MCF 10A (cell line): ENCODE measurements at regions of chr19 and their contacts with region 1.

Region 1: DNA sequence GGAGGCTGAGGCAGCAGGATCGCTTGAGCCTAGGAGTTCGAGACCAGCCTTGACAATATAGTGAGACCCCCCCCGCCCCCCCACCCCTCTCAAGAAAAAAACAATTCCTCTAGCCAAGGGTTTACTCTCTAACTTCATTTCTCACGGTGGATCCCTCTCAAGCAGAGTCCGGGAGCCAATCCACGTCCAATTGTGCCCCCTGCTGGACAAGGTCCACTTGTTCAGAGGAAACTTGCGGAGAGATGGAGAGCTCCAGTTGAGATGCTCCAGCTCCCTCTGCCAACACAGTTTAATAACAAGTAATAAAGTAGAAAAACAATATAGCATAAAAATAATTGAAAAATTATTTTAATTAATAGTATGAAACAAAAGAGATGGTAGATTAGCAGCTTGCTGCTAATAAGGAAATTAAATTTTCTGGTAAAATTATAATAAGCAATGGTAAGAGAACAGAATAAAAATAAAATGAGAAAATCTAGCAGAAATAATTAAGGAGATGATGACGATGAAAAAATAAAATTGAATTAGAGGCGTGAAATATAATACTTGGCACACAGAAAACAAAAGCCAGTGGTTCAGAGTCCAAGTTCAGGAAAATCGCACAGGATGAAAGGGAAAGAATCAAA is 14.5 kb upstream of the SIGLEC14 start:
- DNase-seq: peak; percentile 90
- H3K4me3 Mint-ChIP-seq: no peak overlapping the region
- H3K27ac Mint-ChIP-seq: no peak overlapping the region
- H3K4me1 Mint-ChIP-seq: peaks cover 7% of the 10 kb centered on the region
- H3K27me3 Mint-ChIP-seq: peaks cover 30% of the 10 kb centered on the region
- CTCF ChIP-seq: peak; percentile 66

Region 2: GRCh38 chr19:51012661-51013190 is 648.4 kb before region 1 on chr19:
- CTCF ChIA-PET with region 1: no interaction called
- POLR2A ChIA-PET with region 1: no interaction called
- intact Hi-C with region 1: no loop called
- DNase-seq: no peak
- H3K4me3 Mint-ChIP-seq: no peak overlapping the region
- H3K27ac Mint-ChIP-seq: no peak overlapping the region
- H3K4me1 Mint-ChIP-seq: peaks cover 7% of the 10 kb centered on the region
- H3K27me3 Mint-ChIP-seq: peaks cover 15% of the 10 kb centered on the region
- CTCF ChIP-seq: no peak

Region 3: DNA sequence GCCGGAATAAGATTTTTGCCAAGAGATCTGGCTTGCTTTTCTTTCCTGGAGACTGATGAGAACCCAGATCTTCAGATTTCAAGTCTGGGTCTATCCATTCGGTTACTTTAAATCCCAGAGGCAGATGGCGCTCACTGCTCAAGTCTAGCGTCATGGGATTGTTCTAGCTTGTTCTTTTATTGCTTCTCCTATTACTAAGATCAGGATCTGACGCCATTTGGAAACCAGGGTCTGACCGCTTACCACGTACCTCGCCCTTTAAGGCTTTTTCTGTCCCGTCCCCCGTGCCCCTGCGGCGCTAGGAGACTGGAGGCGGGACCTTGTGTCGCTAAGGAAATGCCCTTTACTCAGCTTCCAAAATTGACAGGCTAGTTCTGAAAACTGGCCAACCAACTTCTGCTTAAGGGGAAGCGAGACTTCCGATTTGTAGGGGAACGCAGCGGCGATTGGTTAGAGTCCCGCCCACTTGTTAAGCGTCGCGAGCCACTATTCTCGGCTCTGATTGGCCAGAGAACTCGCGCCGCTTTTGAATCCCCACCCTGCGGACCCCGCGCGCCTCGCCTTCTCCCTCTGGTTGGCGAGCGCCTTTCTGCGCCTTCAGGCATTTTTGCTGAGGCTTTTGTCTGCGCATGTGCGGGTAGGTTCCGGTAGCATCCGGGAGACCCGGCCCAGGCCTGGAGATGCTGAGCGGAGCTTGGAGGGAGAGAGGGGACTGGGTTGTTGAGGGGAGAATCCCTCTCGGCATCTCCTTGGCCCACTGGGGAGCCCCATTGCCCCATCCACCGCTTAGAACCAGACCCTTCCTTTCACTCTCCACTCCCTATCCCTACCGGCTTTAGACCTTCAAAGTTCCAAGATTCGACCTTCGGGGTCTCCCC is 266.9 kb before region 1 on chr19:
- CTCF ChIA-PET with region 1: interaction called, 28 read pairs
- POLR2A ChIA-PET with region 1: no interaction called
- intact Hi-C with region 1: loop called (anchors 1 kb)
- DNase-seq: peak; percentile 100
- H3K4me3 Mint-ChIP-seq: peak overlapping the region; percentile 82
- H3K27ac Mint-ChIP-seq: peak overlapping the region; percentile 78
- H3K4me1 Mint-ChIP-seq: peaks cover 7% of the 10 kb centered on the region
- H3K27me3 Mint-ChIP-seq: no peaks in the 10 kb centered on the region
- CTCF ChIP-seq: no peak

Region 4: DNA sequence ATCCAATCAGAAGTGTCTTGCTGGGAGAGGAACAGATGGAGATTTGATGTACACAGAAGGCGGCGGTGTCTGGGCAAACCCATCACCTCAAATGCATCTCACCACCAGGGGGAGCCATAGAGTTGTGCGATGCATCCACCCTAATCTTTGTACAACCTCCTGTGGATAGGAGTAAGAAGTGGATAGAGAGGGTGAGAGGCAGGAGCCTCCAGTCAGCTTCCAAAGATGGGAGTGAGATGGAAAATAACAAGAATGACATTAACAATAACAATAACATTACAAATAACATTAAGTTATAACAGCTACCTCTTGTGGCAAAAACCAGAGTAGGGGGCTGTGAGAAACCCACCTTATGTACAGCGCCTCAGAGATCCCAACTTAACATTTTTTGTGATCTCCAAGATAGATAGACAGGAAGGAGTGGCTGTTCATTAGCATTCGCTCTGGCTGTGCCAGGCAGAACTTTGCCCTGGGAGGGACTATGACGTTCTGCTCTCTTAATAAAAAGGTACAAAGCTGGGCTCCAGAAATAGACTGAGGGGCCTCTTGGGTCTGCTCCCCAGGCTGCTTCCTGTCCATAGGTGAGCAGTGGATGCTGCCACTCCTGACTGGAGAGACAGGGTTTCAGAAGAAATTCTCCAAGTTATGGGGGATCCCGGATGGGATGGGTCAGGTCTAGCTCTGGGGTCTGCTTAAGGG is 187.9 kb before region 1 on chr19:
- CTCF ChIA-PET with region 1: interaction called, 66 read pairs
- POLR2A ChIA-PET with region 1: interaction called, 3 read pairs
- intact Hi-C with region 1: loop called (anchors 1 kb)
- DNase-seq: peak; percentile 76
- H3K4me3 Mint-ChIP-seq: no peak overlapping the region
- H3K27ac Mint-ChIP-seq: no peak overlapping the region
- H3K4me1 Mint-ChIP-seq: no peaks in the 10 kb centered on the region
- H3K27me3 Mint-ChIP-seq: no peaks in the 10 kb centered on the region
- CTCF ChIP-seq: peak; percentile 89

Region 5: DNA sequence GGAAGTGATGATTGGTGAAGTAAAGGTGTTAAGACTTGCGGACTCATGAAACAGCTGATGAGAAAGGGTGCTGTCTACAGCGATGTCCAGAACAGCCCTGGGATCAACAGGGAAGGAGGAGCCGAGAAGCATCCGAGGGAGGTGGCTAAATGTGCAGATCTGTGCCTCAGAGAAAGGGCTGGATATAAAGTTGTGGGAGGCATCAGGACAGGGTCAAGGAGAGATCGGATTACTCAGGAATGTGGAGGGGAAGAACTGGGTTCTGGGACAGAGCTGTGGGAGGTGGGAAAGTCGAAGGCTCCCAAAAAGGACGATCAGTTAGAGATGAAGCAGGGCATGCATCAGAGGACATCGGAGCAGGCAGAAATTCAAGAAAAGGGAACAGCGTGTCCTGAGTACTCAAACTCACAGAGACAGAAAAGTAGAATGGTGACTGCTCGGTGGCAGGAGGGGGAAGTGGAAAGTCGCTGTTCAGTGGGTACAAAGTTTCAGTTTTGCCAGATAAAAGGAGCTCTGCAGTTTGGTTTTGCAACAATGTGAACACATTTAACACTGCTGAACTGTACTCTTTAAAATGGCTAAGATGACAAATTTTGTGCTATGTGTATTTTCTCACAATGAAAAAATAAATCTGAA is 16.3 kb before region 1 on chr19:
- CTCF ChIA-PET with region 1: interaction called, 18 read pairs
- POLR2A ChIA-PET with region 1: no interaction called
- intact Hi-C with region 1: no loop called
- DNase-seq: no peak
- H3K4me3 Mint-ChIP-seq: no peak overlapping the region
- H3K27ac Mint-ChIP-seq: no peak overlapping the region
- H3K4me1 Mint-ChIP-seq: no peaks in the 10 kb centered on the region
- H3K27me3 Mint-ChIP-seq: peaks cover 57% of the 10 kb centered on the region
- CTCF ChIP-seq: no peak